ENCODE measurements at regions of chr12 and their contacts with region 1.

Region 1: GRCh38 chr12:114625294-114625851 is 58.6 kb downstream of the TBX3 start:
- DNase-seq: peak; percentile 56
- H3K4me3 ChIP-seq: no peak overlapping the region
- H3K27ac ChIP-seq: no peak overlapping the region
- H3K4me1 ChIP-seq: no peaks in the 10 kb centered on the region
- CTCF ChIP-seq: peak; percentile 88

Region 2: GRCh38 chr12:114999812-115000437 is 374.6 kb after region 1 on chr12:
- CTCF ChIA-PET with region 1: no interaction called
- POLR2A ChIA-PET with region 1: no interaction called
- intact Hi-C with region 1: no loop called
- DNase-seq: peak; percentile 94
- H3K4me3 ChIP-seq: no peak overlapping the region
- H3K27ac ChIP-seq: peak overlapping the region; percentile 77
- H3K4me1 ChIP-seq: peaks cover 61% of the 10 kb centered on the region
- CTCF ChIP-seq: no peak

Region 3: DNA sequence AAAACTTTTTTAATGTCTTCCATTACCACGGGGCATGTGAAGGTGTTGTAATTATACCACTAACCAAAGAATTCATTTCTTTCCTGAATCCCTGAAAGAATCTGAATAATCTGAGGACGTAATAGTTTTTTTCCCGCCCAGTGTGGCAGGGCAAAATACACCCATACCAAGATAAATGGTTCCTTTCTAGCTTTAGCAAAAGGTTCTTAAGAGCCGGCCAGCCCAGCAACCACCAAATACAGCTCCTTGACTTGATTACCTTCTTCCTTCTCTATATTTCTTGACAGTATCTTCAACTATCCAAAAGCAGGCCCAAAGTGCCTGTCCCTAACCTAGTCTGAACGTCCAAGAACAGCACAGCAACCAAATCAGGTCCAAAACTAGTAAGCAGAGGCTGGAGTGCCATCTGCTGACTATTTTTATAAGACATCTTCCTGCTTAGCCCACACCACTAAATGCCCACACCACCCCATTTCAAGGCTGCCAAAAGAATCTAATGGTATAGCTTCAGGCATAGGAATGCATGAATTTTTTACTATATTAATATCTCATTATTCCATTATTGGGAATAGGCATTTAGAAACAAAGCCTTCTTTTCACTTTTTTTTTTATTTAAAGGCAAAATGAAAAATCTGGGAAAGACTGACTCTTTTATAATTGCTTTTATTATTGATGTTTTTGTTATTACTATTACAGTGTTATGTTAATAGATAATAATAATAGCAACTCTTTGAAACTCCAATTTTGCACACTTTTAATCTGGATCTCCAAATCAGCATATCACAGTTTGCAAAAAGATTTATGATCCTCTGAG is 1127.7 kb after region 1 on chr12:
- CTCF ChIA-PET with region 1: no interaction called
- POLR2A ChIA-PET with region 1: no interaction called
- intact Hi-C with region 1: loop called (anchors 2 kb)
- DNase-seq: peak; percentile 44
- H3K4me3 ChIP-seq: no peak overlapping the region
- H3K27ac ChIP-seq: no peak overlapping the region
- H3K4me1 ChIP-seq: no peaks in the 10 kb centered on the region
- CTCF ChIP-seq: peak; percentile 79